ENCODE measurements at regions of chr7 and their contacts with region 1.

Region 1: DNA sequence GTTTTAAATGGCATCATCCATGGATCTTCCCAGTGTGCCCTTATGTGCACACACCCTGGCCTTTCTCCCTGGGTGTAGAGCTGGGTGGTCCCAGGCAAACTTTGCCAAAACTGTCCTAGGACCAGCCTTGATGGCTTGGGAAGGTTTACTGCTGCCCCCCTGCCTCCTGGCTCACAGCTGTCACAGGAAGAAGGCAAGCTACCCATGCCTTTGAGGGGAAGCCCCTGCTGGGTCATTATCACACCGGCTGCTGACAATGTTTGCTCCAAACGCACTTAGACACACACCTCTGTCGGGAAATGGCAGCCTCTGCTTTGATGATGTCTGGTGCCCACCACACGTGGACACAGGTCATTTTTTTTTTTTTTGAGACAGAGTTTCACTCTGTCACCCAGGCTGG is 25.2 kb upstream of the FIGNL1 start:
- DNase-seq: no peak
- H3K4me3 ChIP-seq: no peak overlapping the region
- H3K27ac ChIP-seq: no peak overlapping the region
- H3K4me1 ChIP-seq: no peaks in the 10 kb centered on the region
- H3K27me3 ChIP-seq: no peaks in the 10 kb centered on the region
- CTCF ChIP-seq: no peak
- POLR2A ChIP-seq: no peak

Region 2: DNA sequence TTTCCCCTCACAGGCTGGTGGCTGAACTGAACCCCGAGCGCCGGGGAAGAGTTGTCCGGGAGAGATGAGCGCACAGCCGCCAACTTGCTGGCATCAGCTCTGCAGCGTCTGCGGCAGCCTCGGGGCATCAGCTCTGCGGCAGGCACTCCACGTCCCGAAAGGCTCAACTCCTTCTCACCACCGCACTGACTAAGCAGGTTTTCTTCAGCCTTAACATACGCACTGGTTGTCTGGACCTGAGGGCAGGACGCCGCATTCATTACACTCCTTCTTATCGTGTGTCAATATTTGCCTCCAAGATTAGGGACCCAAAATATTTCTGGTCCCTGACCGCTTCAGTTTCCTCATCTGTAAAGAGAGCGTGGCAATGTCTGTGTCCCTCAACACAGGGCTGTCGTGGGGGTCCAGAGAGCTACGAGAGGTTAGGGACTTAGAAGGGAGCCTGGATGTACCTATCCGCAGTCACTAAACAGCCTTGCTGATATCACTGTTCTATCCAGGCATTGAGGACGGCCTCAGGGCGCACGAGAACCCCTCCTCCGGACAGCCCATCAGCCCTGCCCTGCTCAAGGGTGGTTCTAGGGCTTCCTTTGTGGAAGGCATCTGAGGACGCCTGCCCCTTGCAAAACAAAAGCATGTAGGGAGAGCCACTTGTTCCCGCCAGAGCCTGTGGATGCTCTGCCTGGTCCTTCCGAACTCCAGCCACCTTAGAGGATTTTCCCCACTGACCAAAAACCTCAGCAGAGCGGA is 17.6 kb after region 1 on chr7:
- intact Hi-C with region 1: no loop called
- DNase-seq: peak in 1 of 2 donors; percentile 56
- H3K4me3 ChIP-seq: no peak overlapping the region
- H3K27ac ChIP-seq: no peak overlapping the region
- H3K4me1 ChIP-seq: peaks cover 11% of the 10 kb centered on the region
- H3K27me3 ChIP-seq: no peaks in the 10 kb centered on the region
- CTCF ChIP-seq: no peak
- POLR2A ChIP-seq: no peak

Region 3: DNA sequence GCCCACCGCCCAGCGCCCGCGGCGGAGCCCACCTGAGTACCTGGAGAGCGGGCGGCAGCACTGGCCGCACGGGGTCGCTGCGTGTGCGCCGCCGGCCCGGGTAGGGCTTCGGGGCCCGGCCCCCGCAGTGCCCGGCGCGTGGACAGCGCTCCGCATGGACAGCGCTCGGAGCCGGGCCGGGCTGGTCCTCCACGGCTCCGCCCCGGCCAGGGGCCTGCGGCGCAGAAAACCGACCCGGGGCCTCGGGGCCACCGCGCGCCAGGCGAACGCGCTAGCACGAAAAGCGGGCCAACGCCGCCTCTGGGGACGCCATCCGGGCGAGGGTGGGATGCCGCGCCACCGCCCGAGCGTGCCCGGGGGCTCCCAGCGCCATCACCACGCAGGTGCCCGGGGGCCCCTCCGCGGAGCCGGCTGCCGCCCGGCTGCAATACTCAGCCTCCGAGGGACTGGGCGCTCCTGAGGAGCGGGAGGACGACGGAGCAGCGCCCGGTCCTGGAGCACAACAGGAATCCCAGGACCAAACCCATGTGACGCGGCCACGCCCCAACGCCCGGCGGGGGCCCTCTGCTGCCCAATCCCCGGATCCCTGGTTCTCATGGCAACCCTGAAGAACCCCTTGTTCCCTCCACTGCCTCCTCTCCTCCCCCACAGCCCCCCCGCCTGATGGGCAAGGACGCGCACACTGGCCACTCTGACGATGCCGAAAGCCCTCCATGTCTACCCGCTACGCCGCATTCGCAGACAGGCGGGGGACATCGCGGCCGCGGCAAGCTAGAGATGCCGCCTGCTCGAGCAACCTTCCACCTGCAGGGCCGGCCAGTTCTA is 307.3 kb after region 1 on chr7 and contains the start of gene GRB10:
- intact Hi-C with region 1: loop called (anchors 10 kb)
- DNase-seq: no peak
- H3K4me3 ChIP-seq: peak within 1 kb of the TSS; percentile 38 to 45
- H3K27ac ChIP-seq: no peak within 1 kb of the TSS
- H3K4me1 ChIP-seq: peaks cover 37% of the 10 kb centered on the region
- H3K27me3 ChIP-seq: no peaks in the 10 kb centered on the region
- CTCF ChIP-seq: no peak
- POLR2A ChIP-seq: no peak
- total RNA-seq, gene GRB10: 48.6 TPM

Region 4: GRCh38 chr7:51067757-51068156 is 592.4 kb after region 1 on chr7:
- intact Hi-C with region 1: loop called (anchors 10 kb)
- DNase-seq: no peak
- H3K4me3 ChIP-seq: no peak overlapping the region
- H3K27ac ChIP-seq: no peak overlapping the region
- H3K4me1 ChIP-seq: no peaks in the 10 kb centered on the region
- H3K27me3 ChIP-seq: no peaks in the 10 kb centered on the region
- CTCF ChIP-seq: peak; percentile 19 to 69 (median 66)
- POLR2A ChIP-seq: no peak